H1 (cell line): ENCODE measurements at regions of chr10 and their contacts with region 1.

Region 1: GRCh38 chr10:97407211-97407951 is 6.2 kb upstream of the RRP12 start:
- DNase-seq: peak in 1 of 2 experiments; percentile 82
- H3K4me3 ChIP-seq: peak overlapping the region; percentile 27 to 56 (median 33); a peak in 7 of 8 replicates
- H3K27ac ChIP-seq: no peak overlapping the region
- H3K4me1 ChIP-seq: no peaks in the 10 kb centered on the region
- H3K27me3 ChIP-seq: no peaks in the 10 kb centered on the region
- CTCF ChIP-seq: peak; percentile 70 to 96 (median 92)
- EP300 ChIP-seq: no peak
- POLR2A ChIP-seq: peak in 1 of 2 experiments; percentile 68; a peak in 1 of 3 replicates
- RAD21 ChIP-seq: peak; percentile 80

Region 2: DNA sequence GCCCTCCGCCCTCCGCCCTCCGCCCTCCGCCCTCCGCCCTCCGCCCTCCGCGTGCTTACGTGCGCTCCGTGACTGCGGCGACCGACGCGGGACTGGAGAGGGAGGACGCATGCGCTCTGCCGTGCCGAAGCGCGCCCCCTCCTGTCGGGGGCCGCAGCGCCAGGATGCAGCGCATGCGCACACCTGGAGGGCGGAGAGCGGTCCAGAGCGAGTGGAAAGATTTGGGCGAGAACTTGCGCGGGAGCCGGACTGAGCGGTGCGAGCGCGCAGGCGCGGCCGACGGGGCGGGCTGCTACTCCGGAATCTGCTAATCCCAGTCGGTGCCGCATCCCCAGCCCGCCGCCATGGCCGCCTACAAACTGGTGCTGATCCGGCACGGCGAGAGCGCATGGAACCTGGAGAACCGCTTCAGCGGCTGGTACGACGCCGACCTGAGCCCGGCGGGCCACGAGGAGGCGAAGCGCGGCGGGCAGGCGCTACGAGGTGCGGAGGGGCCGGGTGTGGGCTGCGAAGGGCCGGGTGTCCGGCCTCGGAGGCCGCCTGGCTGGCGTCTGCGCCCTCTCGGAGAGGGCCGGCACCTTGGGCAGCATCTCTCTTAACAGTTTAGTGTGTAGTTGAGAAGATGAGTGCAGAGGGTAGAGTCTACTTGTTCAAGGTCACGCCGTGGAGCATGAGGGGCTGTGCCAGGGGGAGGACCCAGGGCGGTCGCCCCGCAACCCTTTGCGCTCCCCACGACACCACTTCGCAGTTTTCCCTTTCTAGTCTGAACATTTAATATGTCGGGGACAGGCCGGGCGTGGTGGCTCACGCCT is 18.8 kb after region 1 on chr10 and contains the start of gene PGAM1:
- CTCF ChIA-PET with region 1: interaction called, 128 read pairs
- POLR2A ChIA-PET with region 1: interaction called, 31 read pairs
- DNase-seq: peak; percentile 94 to 96
- H3K4me3 ChIP-seq: peak within 1 kb of the TSS; percentile 69 to 100 (median 95)
- H3K27ac ChIP-seq: peak within 1 kb of the TSS; percentile 87
- H3K4me1 ChIP-seq: peaks cover 3 to 6% (median 4%) of the 10 kb centered on the region in 4 experiments; a peak in 6 of 7 replicates
- H3K27me3 ChIP-seq: no peaks in the 10 kb centered on the region
- CTCF ChIP-seq: peak; percentile 72 to 89 (median 85)
- EP300 ChIP-seq: no peak
- POLR2A ChIP-seq: peak; percentile 46 to 75
- RAD21 ChIP-seq: peak in 1 of 2 experiments; percentile 12; a peak in 1 of 4 replicates
- total RNA-seq, gene PGAM1: 799 and 819 TPM in 2 replicates

Region 3: DNA sequence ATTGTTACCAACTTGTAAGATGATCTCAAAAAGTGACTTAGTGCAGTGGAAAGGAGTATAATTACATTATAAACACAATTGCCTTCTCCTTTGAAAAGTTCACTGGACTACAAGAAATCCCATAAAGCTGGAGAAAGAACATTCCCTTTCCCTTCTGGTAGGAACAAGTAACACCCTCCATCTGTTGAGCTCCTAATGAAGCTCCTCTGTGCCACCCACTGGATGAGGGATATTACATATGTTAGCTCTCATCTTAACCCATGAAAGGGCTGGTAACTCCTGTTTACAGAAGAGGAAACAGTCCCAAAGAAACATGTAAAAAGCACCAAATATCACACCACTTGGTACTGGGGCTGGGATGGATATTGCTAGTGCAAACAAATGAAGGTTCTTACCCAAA is 26.7 kb after region 1 on chr10:
- CTCF ChIA-PET with region 1: interaction called, 13 read pairs
- POLR2A ChIA-PET with region 1: interaction called, 31 read pairs
- DNase-seq: no peak
- H3K4me3 ChIP-seq: no peak overlapping the region
- H3K27ac ChIP-seq: no peak overlapping the region
- H3K4me1 ChIP-seq: no peaks in the 10 kb centered on the region
- H3K27me3 ChIP-seq: no peaks in the 10 kb centered on the region
- CTCF ChIP-seq: no peak
- EP300 ChIP-seq: no peak
- POLR2A ChIP-seq: no peak
- RAD21 ChIP-seq: no peak

Region 4: GRCh38 chr10:97445722-97446639 is 38.6 kb after region 1 on chr10 and contains the starts of genes EXOSC1 and ZDHHC16:
- CTCF ChIA-PET with region 1: interaction called, 19 read pairs
- POLR2A ChIA-PET with region 1: interaction called, 4 read pairs
- DNase-seq: peak; percentile 86 to 94
- H3K4me3 ChIP-seq: peak within 1 kb of the TSS; percentile 78 to 98 (median 87)
- H3K27ac ChIP-seq: peak within 1 kb of the TSS; percentile 78
- H3K4me1 ChIP-seq: peaks cover 0 to 8% (median under 1%) of the 10 kb centered on the region in 4 experiments; a peak in 5 of 7 replicates
- H3K27me3 ChIP-seq: no peaks in the 10 kb centered on the region
- CTCF ChIP-seq: peak in 1 of 3 experiments; percentile 1; a peak in 1 of 4 replicates
- EP300 ChIP-seq: no peak
- POLR2A ChIP-seq: peak; percentile 63 to 86
- RAD21 ChIP-seq: no peak; a peak in 1 of 4 replicates
- total RNA-seq, gene EXOSC1: 52.1 and 53.6 TPM in 2 replicates
- total RNA-seq, gene ZDHHC16: 45.9 and 50.4 TPM in 2 replicates